AG04450 (cell line): ENCODE measurements at regions of chr1 and their contacts with region 1.

Region 1: GRCh38 chr1:115642168-115643072 is 650 bp downstream of the VANGL1 start:
- DNase-seq: no peak
- H3K4me3 ChIP-seq: peak overlapping the region; percentile 82
- H3K27ac ChIP-seq: no peak overlapping the region
- H3K27me3 ChIP-seq: peaks cover 6% of the 10 kb centered on the region
- CTCF ChIP-seq: 0 out of 2 replicates have a peak, but pooled peaks have one; percentile 1

Region 2: GRCh38 chr1:114379987-114380386 is 1262.4 kb before region 1 on chr1:
- CTCF ChIA-PET with region 1: no interaction called
- POLR2A ChIA-PET with region 1: interaction called, 10 read pairs
- DNase-seq: no peak
- H3K4me3 ChIP-seq: no peak overlapping the region
- H3K27ac ChIP-seq: no peak overlapping the region
- H3K27me3 ChIP-seq: no peaks in the 10 kb centered on the region
- CTCF ChIP-seq: no peak

Region 3: GRCh38 chr1:115911324-115911723 is 268.9 kb after region 1 on chr1:
- CTCF ChIA-PET with region 1: no interaction called
- POLR2A ChIA-PET with region 1: no interaction called
- DNase-seq: no peak
- H3K4me3 ChIP-seq: no peak overlapping the region
- H3K27ac ChIP-seq: no peak overlapping the region
- H3K27me3 ChIP-seq: no peaks in the 10 kb centered on the region
- CTCF ChIP-seq: no peak